PC-3 (cell line): ENCODE measurements at regions of chr22 and their contacts with region 1.

Region 1: DNA sequence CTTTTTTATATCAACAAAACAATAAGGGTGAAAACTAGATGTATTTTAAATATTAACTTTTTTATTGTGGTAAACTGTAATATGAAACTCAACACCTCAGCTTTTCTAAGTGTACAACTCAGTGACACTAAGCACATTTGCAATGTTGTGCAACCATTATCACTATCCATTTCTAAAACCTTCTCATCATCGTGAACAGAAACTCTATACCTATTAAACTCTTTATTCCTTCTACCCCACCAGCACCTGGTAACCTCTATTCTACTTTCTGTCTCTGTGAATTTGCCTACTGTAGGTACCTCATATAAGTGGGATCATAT is 9.4 kb downstream of the HORMAD2 start:
- DNase-seq: no peak
- ATAC-seq: no peak
- H3K4me3 ChIP-seq: no peak overlapping the region
- H3K27ac ChIP-seq: 0 out of 2 replicates have a peak overlapping the region, but pooled peaks have one; percentile 40
- H3K4me1 ChIP-seq: no peaks in the 10 kb centered on the region; the same call in 1 of the 2 replicates
- H3K27me3 ChIP-seq: no peaks in the 10 kb centered on the region
- CTCF ChIP-seq: no peak

Region 2: DNA sequence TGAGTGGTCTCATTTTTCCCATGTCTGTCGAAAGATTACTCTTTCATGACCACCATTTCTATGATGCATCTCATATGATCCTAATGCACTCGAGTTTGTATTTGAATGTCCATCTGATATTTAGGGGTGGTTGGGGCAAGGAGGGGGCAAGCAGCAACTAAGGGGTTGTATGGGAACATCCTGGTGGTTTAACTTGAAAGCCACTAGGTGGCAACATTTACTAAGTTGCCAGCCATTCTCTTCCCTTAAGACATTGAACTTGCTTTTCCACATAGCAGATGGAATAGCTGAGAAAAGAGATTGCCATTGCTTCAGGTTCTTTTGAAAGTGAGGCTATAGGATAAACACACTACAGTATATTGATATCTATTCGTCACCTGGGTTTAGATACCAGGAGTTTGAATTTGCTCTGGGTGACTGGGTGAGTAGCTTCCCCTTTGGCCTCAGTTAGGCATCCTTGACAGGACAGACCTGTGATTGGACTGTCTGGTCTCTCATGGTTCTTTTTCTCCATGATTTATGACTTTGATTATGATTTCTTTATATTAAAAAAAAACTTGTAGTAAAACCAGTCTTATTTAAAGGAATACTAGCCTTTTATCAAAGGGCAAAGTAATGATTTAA is 453.8 kb before region 1 on chr22:
- CTCF ChIA-PET with region 1: no interaction called
- POLR2A ChIA-PET with region 1: no interaction called
- intact Hi-C with region 1: loop called (anchors 2 kb)
- DNase-seq: peak; percentile 60
- ATAC-seq: peak; percentile 63
- H3K4me3 ChIP-seq: no peak overlapping the region
- H3K27ac ChIP-seq: no peak overlapping the region
- H3K4me1 ChIP-seq: peaks cover 40% of the 10 kb centered on the region
- H3K27me3 ChIP-seq: no peaks in the 10 kb centered on the region
- CTCF ChIP-seq: peak; percentile 75

Region 3: GRCh38 chr22:30015846-30016245 is 73.8 kb before region 1 on chr22:
- CTCF ChIA-PET with region 1: no interaction called
- POLR2A ChIA-PET with region 1: no interaction called
- intact Hi-C with region 1: loop called (anchors 2 kb)
- DNase-seq: peak; percentile 35
- ATAC-seq: peak; percentile 50
- H3K4me3 ChIP-seq: no peak overlapping the region
- H3K27ac ChIP-seq: no peak overlapping the region
- H3K4me1 ChIP-seq: peaks cover 17% of the 10 kb centered on the region
- H3K27me3 ChIP-seq: no peaks in the 10 kb centered on the region
- CTCF ChIP-seq: no peak